Mucosa of descending colon (tissue), 3 donors: ENCODE measurements at regions of chr6 and their contacts with region 1.

Region 1: GRCh38 chr6:30883685-30884520 is at the start of gene DDR1:
- DNase-seq: peak; percentile 84 to 91 (median 85)
- ATAC-seq: peak; percentile 62
- H3K4me3 ChIP-seq: peak within 1 kb of the TSS; percentile 65
- H3K4me1 ChIP-seq: peaks cover 27% of the 10 kb centered on the region
- CTCF ChIP-seq: no peak
- total RNA-seq, gene DDR1: 145 to 336 (median 271) TPM

Region 2: GRCh38 chr6:30742316-30743098 is 141.4 kb before region 1 on chr6 and contains the start of gene FLOT1:
- intact Hi-C with region 1: loop called (anchors 10 kb)
- DNase-seq: peak; percentile 99 to 100 (median 99)
- ATAC-seq: peak; percentile 81
- H3K4me3 ChIP-seq: peak within 1 kb of the TSS; percentile 71
- H3K4me1 ChIP-seq: peaks cover 34% of the 10 kb centered on the region
- CTCF ChIP-seq: peak; percentile 7
- total RNA-seq, gene FLOT1: 133 to 175 (median 152) TPM